ENCODE measurements at regions of chr2 and their contacts with region 1.

Region 1: GRCh38 chr2:231925303-231926179 is 655 bp downstream of the NPPC start:
- DNase-seq: peak; percentile 59 to 93
- H3K4me3 ChIP-seq: peak overlapping the region; percentile 52 to 75 (median 66)
- H3K27ac ChIP-seq: no peak overlapping the region
- H3K4me1 ChIP-seq: peaks cover 3 to 20% (median 14%) of the 10 kb centered on the region in 4 experiments
- H3K27me3 ChIP-seq: peaks cover 24 to 55% (median 43%) of the 10 kb centered on the region in 4 experiments
- CTCF ChIP-seq: peak in 2 of 3 experiments; percentile 80 to 89; a peak in 3 of 4 replicates
- EP300 ChIP-seq: no peak
- POLR2A ChIP-seq: no peak
- RAD21 ChIP-seq: peak; percentile 56 to 73

Region 2: GRCh38 chr2:231946241-231946814 is 20.8 kb after region 1 on chr2:
- CTCF ChIA-PET with region 1: interaction called, 24 read pairs
- POLR2A ChIA-PET with region 1: no interaction called
- DNase-seq: no peak
- H3K4me3 ChIP-seq: no peak overlapping the region
- H3K27ac ChIP-seq: no peak overlapping the region
- H3K4me1 ChIP-seq: no peaks in the 10 kb centered on the region
- H3K27me3 ChIP-seq: no peaks in the 10 kb centered on the region
- CTCF ChIP-seq: no peak
- EP300 ChIP-seq: no peak
- POLR2A ChIP-seq: no peak
- RAD21 ChIP-seq: no peak

Region 3: GRCh38 chr2:232043966-232044365 is 118.4 kb after region 1 on chr2:
- CTCF ChIA-PET with region 1: interaction called, 10 read pairs
- POLR2A ChIA-PET with region 1: no interaction called
- DNase-seq: no peak
- H3K4me3 ChIP-seq: no peak overlapping the region
- H3K27ac ChIP-seq: no peak overlapping the region
- H3K4me1 ChIP-seq: peaks cover 0 to 2% (median 0%) of the 10 kb centered on the region in 4 experiments; a peak in 1 of 7 replicates
- H3K27me3 ChIP-seq: no peaks in the 10 kb centered on the region
- CTCF ChIP-seq: no peak
- EP300 ChIP-seq: no peak
- POLR2A ChIP-seq: no peak
- RAD21 ChIP-seq: no peak

Region 4: GRCh38 chr2:232142049-232142448 is 216.5 kb after region 1 on chr2:
- CTCF ChIA-PET with region 1: interaction called, 62 read pairs
- POLR2A ChIA-PET with region 1: interaction called, 10 read pairs
- DNase-seq: no peak
- H3K4me3 ChIP-seq: no peak overlapping the region
- H3K27ac ChIP-seq: no peak overlapping the region
- H3K4me1 ChIP-seq: no peaks in the 10 kb centered on the region
- H3K27me3 ChIP-seq: no peaks in the 10 kb centered on the region
- CTCF ChIP-seq: peak; percentile 41 to 91 (median 82)
- EP300 ChIP-seq: no peak
- POLR2A ChIP-seq: no peak
- RAD21 ChIP-seq: peak; percentile 86 to 91

Region 5: DNA sequence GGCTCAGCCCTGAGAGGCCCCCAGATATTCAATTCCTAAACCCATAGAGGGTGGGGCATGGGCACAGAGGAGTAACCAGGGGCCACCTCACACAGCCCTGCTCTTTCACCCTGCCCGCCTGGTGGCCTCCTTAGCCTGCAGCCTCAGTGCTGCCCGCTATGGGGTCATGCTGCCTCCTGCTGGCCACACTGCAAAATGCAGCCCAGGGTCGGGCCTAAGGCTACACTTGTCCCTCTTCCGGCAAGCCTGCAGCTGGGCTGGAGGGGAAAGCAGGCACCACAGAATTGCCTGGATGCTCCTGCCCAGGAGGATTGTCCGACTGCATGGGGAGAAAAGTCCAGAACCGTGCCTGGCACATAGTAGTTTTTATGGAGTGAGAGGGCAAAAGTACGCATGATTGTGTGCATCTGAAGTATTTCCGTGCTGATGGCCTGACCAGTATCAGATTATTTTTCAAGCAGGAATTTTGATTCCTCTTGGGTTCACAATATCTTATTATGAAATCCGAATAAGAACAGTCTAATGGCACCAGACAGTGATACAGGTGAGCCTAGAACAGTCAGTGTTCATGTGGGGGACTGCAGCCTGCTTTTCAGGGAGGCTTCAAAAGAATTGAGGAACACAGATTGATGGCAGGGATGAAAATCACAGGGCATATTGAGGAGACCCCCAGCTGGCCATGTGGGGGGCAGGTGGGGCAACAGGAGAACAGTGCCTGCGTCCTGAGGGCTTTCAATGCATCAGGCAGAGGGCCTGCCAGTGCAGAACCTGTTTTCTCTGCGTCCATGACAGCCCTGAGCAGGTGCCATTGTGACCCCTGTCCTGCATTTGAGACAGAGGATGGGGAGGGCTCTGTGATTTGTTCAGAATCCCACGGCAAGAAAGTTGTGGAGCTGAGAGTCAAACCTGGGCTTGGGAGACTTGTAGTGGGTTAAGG is 401.8 kb after region 1 on chr2:
- CTCF ChIA-PET with region 1: interaction called, 124 read pairs
- POLR2A ChIA-PET with region 1: no interaction called
- DNase-seq: peak; percentile 77 to 99
- H3K4me3 ChIP-seq: no peak overlapping the region
- H3K27ac ChIP-seq: no peak overlapping the region
- H3K4me1 ChIP-seq: peaks cover 0 to 18% (median 10%) of the 10 kb centered on the region in 4 experiments; a peak in 6 of 7 replicates
- H3K27me3 ChIP-seq: no peaks in the 10 kb centered on the region
- CTCF ChIP-seq: peak in 2 of 3 experiments; percentile 88 to 90; a peak in 3 of 4 replicates
- EP300 ChIP-seq: no peak
- POLR2A ChIP-seq: no peak
- RAD21 ChIP-seq: peak; percentile 78 to 82

Measured in H1 (cell line).